IMR-90 (cell line): ENCODE measurements at regions of chr19 and their contacts with region 1.

Region 1: DNA sequence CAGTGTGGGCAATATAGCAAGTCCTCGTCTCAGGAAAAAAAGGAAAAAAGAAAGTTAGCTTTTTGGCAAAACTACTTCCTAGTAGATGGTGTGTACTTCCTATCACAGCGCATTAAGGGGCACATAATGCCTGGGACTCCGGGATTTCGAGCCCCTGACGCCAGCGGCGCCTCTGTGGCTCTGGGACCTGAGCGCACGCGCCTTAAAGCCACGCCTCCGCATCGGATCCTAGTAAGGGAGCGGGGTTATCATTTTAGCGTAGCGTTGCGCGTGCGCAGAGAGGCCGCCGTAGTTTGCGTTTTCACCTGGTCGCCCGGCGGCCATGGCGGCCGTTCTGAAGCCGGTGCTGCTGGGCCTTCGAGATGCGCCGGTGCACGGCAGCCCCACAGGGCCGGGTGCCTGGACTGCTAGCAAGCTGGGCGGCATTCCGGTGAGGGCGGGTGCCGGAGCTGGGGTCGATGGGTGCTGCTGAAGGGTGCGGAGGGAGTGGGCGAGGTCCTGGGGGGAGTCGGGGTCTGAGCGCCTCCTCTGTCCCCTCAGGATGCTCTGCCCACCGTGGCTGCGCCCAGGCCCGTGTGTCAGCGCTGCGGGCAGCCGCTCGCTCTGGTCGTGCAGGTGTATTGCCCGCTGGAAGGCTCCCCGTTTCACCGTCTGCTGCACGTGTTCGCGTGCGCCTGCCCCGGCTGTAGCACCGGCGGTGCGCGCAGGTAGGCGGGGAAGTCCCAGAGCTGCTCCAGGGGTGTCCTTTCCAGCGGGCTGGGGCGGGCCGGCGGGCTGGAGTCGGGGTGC is at the start of gene PDCD2L:
- DNase-seq: peak; percentile 85
- ATAC-seq: peak; percentile 99
- H3K4me3 ChIP-seq: peak within 1 kb of the TSS; percentile 93
- H3K27ac ChIP-seq: peak within 1 kb of the TSS; percentile 59; the same call in 1 of the 2 replicates
- H3K4me1 ChIP-seq: peaks cover 2% of the 10 kb centered on the region; the same call in 1 of the 2 replicates
- H3K27me3 ChIP-seq: no peaks in the 10 kb centered on the region
- CTCF ChIP-seq: no peak
- POLR2A ChIP-seq: no peak
- RAD21 ChIP-seq: 0 out of 2 replicates have a peak, but pooled peaks have one; percentile 13
- total RNA-seq, gene PDCD2L: 10.6 and 12.2 TPM in 2 replicates

Region 2: DNA sequence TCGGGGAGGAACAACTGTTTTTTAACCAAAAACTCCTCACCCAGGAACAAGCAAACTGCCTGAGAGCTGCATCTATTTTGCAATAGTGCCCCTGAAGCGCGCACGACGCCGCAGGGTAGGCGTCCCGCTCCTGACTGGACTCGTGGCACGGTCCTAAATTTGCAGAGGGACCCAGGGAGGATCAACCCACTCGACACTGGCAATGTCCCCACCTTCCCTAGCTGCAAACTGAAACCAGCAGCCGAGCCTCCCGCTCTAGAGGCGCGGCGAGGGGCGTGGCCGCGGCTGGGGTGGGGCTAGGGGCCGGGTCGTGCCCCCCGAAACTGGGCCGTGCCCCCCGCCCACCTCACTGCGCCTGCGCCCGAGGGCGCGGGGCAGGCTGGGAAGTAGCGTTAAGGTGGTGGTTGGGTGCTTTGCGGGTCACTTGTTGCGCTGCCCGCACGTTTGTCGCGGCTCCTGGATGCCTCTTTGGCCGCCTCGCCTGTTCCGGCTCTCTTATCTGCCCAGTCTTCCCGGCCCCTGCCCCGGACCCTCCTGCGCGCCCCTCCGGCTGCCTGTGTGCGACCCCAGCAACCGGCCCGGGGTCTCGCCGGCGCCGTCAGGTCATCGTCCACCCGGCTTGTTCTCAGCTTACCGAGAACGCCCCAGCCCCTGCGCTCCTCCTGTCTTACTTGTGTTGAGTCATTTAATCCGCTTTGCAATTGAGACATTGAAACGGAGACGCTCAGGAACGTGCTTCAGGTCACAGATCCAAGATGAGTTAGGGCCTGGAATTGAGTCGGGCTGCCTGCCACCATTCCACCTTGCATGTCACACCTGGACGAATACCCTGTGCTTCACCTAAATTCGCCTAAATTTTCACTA is 269.9 kb before region 1 on chr19:
- CTCF ChIA-PET with region 1: no interaction called
- POLR2A ChIA-PET with region 1: no interaction called
- dilution Hi-C with region 1: no loop called
- in situ Hi-C with region 1: no loop called
- intact Hi-C with region 1: no loop called
- DNase-seq: peak; percentile 47
- ATAC-seq: peak; percentile 99
- H3K4me3 ChIP-seq: peak overlapping the region; percentile 60
- H3K27ac ChIP-seq: peak overlapping the region; percentile 70
- H3K4me1 ChIP-seq: no peaks in the 10 kb centered on the region
- H3K27me3 ChIP-seq: no peaks in the 10 kb centered on the region; the same call in 1 of the 2 replicates
- CTCF ChIP-seq: no peak
- POLR2A ChIP-seq: no peak
- RAD21 ChIP-seq: no peak

Region 3: DNA sequence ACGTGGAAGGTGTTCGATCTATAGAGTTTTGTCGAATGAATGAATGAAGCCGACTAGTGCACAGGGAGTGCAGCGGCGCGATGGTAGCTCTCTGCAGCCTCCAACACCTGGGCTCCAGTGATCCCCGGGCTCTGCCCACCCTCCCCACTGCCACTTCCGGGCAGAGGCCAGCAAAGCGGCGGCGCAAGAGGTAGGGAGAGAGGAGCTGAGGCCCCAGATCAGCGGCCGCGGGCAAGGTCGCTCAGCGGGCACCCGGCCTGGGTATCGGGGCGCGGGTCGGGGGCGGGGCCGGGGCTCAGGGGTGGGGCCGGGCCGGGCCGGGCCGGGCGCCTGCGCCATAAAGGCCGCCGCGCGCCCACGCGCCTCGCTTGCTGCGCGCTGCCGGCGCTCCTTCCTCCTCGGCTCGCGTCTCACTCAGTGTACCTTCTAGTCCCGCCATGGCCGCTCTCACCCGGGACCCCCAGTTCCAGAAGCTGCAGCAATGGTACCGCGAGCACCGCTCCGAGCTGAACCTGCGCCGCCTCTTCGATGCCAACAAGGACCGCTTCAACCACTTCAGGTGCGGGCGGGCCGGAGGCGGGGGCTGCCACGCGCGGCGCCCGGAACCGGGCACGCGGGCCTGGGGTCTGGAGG is 39.4 kb before region 1 on chr19 and contains the start of gene GPI:
- CTCF ChIA-PET with region 1: no interaction called
- POLR2A ChIA-PET with region 1: no interaction called
- dilution Hi-C with region 1: no loop called
- in situ Hi-C with region 1: no loop called
- intact Hi-C with region 1: loop called (anchors 5 kb)
- DNase-seq: peak; percentile 24
- ATAC-seq: peak; percentile 89
- H3K4me3 ChIP-seq: peak within 1 kb of the TSS; percentile 99
- H3K27ac ChIP-seq: peak within 1 kb of the TSS; percentile 83
- H3K4me1 ChIP-seq: peaks cover 17% of the 10 kb centered on the region
- H3K27me3 ChIP-seq: no peaks in the 10 kb centered on the region
- CTCF ChIP-seq: no peak
- POLR2A ChIP-seq: peak; percentile 61; the same call in 1 of the 2 replicates
- RAD21 ChIP-seq: no peak
- total RNA-seq, gene GPI: 142 and 147 TPM in 2 replicates

Region 4: DNA sequence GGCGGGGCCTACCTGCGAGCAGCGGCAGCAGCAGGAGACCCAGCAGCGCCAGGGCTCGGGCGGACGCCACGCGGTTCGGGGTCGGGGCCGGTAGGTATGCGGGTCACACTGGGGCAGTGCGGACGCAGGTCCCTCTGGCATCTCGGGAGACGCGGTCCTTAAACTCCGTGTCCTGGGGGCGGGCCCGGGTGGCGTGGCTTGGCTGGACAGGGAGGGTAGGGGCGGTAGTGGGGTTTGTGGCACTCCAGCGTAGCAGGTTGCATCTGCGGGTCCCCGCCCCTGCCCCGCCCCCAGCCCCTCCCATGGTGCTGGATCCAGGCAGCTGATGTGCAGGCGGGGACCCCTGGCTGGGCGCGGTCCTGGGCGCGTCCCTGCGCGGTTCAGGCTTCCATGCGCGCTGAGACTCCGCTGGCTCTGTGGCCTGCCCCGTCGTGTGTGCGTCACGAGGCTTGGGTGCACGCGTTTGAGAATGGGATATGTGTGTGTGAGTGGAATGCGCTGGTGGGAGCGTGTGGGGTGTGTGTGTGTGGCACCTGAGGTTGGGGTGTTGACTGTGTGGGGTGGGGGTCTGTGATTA is 173.3 kb after region 1 on chr19:
- CTCF ChIA-PET with region 1: no interaction called
- POLR2A ChIA-PET with region 1: no interaction called
- dilution Hi-C with region 1: no loop called
- in situ Hi-C with region 1: no loop called
- intact Hi-C with region 1: no loop called
- DNase-seq: no peak
- ATAC-seq: no peak
- H3K4me3 ChIP-seq: no peak overlapping the region
- H3K27ac ChIP-seq: no peak overlapping the region
- H3K4me1 ChIP-seq: no peaks in the 10 kb centered on the region
- H3K27me3 ChIP-seq: no peaks in the 10 kb centered on the region
- CTCF ChIP-seq: no peak
- POLR2A ChIP-seq: no peak
- RAD21 ChIP-seq: no peak